ENCODE measurements at regions of chr6 and their contacts with region 1.

Region 1: DNA sequence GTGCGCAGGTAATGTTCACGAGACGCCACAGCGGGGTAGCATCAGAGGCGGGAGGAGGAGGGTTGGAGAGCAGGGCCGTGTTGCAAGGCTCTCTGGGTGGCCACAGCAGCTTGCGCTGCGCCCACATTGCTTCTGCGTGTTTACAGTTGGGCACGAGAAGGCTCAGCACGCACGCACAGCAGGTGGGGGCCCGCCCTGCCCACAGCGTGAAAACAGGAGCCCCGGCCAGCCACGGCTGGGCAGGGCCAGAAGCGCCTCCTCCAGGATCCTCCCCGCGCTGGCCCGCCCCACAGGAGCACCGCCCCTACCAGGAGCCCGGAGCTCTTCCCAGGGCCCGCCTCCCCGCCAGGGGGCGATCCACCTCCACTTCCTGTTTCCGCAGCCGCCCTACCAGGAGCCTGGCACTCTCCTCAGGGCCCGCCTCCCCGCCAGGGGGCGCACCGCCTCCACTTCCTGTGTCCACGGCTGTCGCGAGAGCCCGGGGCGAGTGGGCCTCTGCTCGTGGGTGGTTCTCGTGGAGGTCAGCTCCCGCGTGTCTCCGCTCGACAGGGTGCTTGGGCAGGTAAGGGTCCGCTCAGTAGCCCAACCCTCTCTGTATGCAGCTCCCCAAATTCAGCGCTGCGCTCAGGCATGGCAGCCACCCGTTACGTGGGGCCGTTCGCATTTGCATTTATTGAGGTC is at the start of gene FAM50B:
- H3K4me3 ChIP-seq: peak within 1 kb of the TSS; percentile 52
- H3K27ac ChIP-seq: peak within 1 kb of the TSS; percentile 37; the same call in 1 of the 2 replicates
- H3K4me1 ChIP-seq: no peaks in the 10 kb centered on the region
- CTCF ChIP-seq: no peak

Region 2: GRCh38 chr6:2385471-2385983 is 1463.5 kb before region 1 on chr6:
- CTCF ChIA-PET with region 1: no interaction called
- POLR2A ChIA-PET with region 1: no interaction called
- H3K4me3 ChIP-seq: no peak overlapping the region
- H3K27ac ChIP-seq: no peak overlapping the region
- H3K4me1 ChIP-seq: no peaks in the 10 kb centered on the region
- CTCF ChIP-seq: no peak

Region 3: GRCh38 chr6:3748208-3749066 is 100.6 kb before region 1 on chr6:
- CTCF ChIA-PET with region 1: interaction called, 33 read pairs
- POLR2A ChIA-PET with region 1: interaction called, 8 read pairs
- H3K4me3 ChIP-seq: no peak overlapping the region
- H3K27ac ChIP-seq: no peak overlapping the region
- H3K4me1 ChIP-seq: peaks cover 3% of the 10 kb centered on the region; the same call in 1 of the 2 replicates
- CTCF ChIP-seq: peak; percentile 76

Region 4: GRCh38 chr6:3861424-3861823 is 12.4 kb after region 1 on chr6:
- CTCF ChIA-PET with region 1: interaction called, 31 read pairs
- POLR2A ChIA-PET with region 1: interaction called, 3 read pairs
- H3K4me3 ChIP-seq: no peak overlapping the region
- H3K27ac ChIP-seq: no peak overlapping the region
- H3K4me1 ChIP-seq: no peaks in the 10 kb centered on the region
- CTCF ChIP-seq: no peak

Region 5: DNA sequence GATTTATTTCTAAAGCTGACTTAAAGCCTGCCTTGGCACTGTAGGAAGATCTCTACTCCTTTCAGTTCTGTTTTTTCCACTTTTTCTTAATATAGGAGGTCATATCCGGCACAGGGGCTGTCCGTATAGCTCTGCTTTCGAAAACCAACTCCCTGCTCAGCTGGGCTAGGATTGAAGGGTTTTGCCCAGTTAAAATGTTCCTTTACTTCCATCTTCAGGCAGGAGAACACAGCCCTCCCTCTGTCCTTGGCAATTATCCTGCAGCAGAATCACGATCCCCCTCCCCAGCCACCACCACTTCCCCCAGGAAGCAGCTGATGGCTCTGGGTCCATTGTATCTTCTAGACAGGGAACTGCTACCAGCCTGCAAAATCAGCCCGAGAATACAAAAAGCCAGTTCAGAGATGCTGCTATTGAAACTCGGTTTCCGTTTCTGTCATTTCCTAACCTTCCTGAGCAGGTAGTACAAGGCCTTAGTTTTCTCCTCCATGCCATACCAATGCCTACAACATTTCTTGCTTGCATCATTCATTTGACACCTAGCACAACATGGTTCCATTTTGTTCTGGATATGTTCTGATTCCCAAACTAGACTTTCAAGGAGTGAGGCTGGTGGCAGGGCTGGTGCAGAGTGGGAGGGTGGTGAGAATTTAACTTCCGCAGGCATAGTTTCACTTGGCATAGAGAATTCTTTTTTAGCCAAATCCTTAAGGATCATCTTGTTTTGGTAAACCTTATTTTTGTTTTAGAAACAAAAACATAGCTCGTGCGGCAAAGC is 54.0 kb after region 1 on chr6:
- CTCF ChIA-PET with region 1: interaction called, 10 read pairs
- POLR2A ChIA-PET with region 1: no interaction called
- H3K4me3 ChIP-seq: no peak overlapping the region
- H3K27ac ChIP-seq: no peak overlapping the region
- H3K4me1 ChIP-seq: no peaks in the 10 kb centered on the region; the same call in 1 of the 2 replicates
- CTCF ChIP-seq: no peak

Region 6: DNA sequence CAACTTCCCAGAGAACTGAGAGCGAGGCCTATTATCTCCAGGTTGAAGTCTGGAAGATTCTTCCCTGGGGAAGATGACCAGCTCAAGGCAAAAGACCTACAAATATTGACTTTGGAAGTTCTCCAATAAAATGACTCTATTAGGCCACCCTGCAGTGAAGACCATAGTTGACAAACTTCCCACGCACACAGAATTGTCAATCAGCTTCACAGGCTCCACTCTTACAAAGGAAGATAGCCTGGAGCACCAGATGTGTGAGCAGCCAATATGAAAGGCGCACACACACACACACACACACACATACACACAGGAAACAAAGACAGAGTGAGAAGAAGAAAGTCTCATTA is 113.9 kb after region 1 on chr6:
- CTCF ChIA-PET with region 1: interaction called, 10 read pairs
- POLR2A ChIA-PET with region 1: no interaction called
- H3K4me3 ChIP-seq: no peak overlapping the region
- H3K27ac ChIP-seq: no peak overlapping the region
- H3K4me1 ChIP-seq: peaks cover 10% of the 10 kb centered on the region
- CTCF ChIP-seq: no peak

Region 7: DNA sequence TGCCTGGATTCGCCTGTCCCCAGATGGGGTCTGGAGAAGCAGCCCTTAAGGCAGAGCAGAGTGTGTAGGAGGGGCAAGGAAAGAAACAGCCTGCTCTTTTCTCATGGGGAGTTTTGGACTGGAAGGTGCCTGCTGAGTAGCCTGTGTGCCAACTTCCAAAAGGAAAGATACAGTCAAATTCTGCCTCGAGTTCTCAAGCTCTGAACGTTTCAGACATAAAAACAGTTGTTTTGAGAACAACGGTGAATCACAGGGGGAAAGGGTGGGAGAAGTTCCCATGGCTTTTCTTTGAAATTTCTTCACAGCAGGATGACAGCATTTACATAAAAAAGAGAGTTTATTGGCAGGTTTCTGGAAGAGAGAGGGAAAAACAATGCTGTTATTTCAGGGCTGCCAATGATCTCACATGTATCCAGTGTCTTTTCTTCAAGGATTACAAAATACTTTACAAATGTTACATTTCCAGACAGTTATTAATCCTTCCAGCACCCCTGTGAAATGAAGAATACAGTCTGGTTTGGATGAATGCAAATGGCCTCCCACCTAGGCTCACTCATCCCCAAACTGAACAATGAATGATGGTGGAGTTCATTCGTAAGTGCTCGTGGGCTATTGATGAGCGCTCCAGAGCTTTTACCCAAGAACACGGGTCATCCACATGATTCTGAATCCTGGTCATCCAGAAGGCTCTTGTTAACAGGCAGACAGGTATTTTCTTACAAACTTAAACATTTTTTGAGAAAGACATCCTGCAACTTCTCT is 320.1 kb after region 1 on chr6:
- CTCF ChIA-PET with region 1: no interaction called
- POLR2A ChIA-PET with region 1: no interaction called
- H3K4me3 ChIP-seq: no peak overlapping the region
- H3K27ac ChIP-seq: no peak overlapping the region
- H3K4me1 ChIP-seq: no peaks in the 10 kb centered on the region
- CTCF ChIP-seq: no peak